Activated CD8-positive, alpha-beta T cell treated with anti-CD3 and anti-CD28 coated beads for 36 hours (primary cell): ENCODE measurements at regions of chr17 and their contacts with region 1.

Region 1: GRCh38 chr17:40854159-40854814 is 12.7 kb downstream of the KRT12 start:
- DNase-seq: no peak
- ATAC-seq: no peak
- H3K4me3 Mint-ChIP-seq: no peak overlapping the region
- H3K27ac Mint-ChIP-seq: no peak overlapping the region
- H3K4me1 Mint-ChIP-seq: peaks cover 3% of the 10 kb centered on the region
- H3K27me3 Mint-ChIP-seq: peaks cover 19% of the 10 kb centered on the region
- CTCF ChIP-seq: no peak

Region 2: GRCh38 chr17:40803617-40804082 is 50.6 kb before region 1 on chr17:
- CTCF ChIA-PET with region 1: interaction called, 11 read pairs
- POLR2A ChIA-PET with region 1: interaction called, 4 read pairs
- intact Hi-C with region 1: no loop called
- DNase-seq: peak; percentile 89
- ATAC-seq: peak; percentile 99
- H3K4me3 Mint-ChIP-seq: no peak overlapping the region
- H3K27ac Mint-ChIP-seq: no peak overlapping the region
- H3K4me1 Mint-ChIP-seq: peaks cover 2% of the 10 kb centered on the region
- H3K27me3 Mint-ChIP-seq: peaks cover 41% of the 10 kb centered on the region
- CTCF ChIP-seq: peak; percentile 92

Region 3: DNA sequence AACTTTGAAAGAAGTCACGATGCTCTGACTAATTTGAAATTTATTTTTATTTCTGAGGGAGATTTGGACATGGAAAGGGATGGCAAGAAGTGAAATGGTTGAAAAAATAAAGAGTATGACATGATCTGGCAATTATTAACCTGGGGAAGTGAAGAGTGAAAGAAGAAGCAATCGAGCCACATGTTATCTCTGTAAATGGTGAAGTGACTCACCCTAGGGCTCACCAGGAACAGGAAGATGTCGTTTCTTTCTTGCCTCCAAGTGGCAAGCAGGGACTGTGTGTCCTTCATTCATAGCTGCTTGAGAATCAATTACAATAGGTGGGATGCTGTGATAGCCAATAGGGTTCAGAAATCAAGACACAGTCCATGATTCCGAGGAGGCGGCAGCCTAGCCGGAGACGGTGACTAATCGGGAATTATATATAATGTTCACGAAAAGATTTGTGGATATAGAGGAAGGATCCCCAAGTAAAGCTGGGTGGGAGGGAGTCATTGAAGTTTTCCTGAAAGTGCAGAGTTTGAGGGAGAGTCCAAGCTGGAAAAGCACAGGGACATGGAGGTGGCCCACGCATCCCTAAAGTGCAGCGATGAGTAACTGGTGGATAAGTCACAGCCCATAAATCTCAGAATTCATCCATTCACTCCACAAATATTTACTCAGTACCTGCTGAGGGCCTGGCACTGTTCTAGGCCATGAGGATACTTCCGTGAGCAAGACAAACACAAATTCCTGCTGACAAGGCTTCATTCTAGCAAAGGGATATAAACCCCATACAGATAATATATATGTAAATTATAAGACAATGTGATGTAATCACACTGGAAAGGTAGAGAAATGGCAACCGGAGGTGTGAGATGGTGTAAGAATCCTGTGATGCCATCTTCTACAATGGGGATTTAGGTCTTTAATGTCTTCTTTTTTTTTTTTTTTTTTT is 49.1 kb after region 1 on chr17:
- CTCF ChIA-PET with region 1: no interaction called
- POLR2A ChIA-PET with region 1: no interaction called
- intact Hi-C with region 1: no loop called
- DNase-seq: peak; percentile 9
- ATAC-seq: no peak
- H3K4me3 Mint-ChIP-seq: no peak overlapping the region
- H3K27ac Mint-ChIP-seq: no peak overlapping the region
- H3K4me1 Mint-ChIP-seq: peaks cover 10% of the 10 kb centered on the region
- H3K27me3 Mint-ChIP-seq: peaks cover 23% of the 10 kb centered on the region
- CTCF ChIP-seq: no peak